Activated T-helper 1 cell treated with anti-CD3 and anti-CD28 coated beads, Interleukin-12 subunit alpha, Interleukin-12 subunit beta, Interleukin-2, Interleukin-4 antibody, amounts not matched to agents 30 ng/mL and 10 ng/mL and 1 ng/mL, durations not matched to agents 14 hours and 24 hours and 36 hours (primary cell): ENCODE measurements at regions of chr17 and their contacts with region 1.

Region 1: DNA sequence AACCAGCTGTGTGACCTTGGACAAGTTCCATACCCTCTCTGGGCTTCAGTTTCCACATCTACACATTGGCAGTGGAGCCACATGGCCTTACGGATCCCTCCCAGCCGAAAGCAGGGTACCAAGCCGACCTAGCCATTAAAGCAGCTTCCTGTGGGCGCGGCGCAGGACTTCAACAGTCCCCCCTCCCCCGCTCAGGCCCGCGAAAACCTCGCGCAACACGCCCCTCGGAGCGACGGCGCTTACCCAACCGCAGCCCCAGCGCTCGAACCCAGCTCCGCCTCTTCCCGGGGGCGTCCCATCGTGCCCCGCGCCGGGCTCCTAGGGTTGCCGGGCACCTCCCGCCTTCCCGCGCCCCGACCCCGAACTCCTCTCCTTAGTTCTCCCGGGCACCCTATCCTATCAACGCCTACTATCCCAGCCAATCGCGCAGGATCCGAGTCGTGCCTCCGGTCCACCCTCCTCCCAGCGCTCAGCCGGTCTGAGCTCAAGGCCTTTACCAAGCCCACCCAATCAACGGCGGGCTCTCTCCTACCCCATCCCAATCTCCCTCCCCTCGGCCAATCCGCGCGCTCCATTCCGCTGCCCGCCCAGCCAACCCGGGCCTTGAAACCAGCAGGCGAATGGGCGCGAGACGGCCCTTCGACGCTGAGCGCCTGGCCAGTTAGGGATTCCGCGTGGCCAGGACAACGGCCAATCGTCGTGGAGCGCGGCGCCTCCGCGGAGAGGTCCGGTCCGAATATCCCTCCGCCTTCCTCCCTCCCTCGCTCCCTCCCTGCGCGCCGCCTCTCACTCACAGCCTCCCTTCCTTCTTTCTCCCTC is at the start of gene KPNB1:
- DNase-seq: peak; percentile 98
- H3K4me3 Mint-ChIP-seq: peak within 1 kb of the TSS; percentile 98
- H3K27ac Mint-ChIP-seq: peak within 1 kb of the TSS; percentile 96
- H3K4me1 Mint-ChIP-seq: peaks cover 33% of the 10 kb centered on the region
- H3K27me3 Mint-ChIP-seq: no peaks in the 10 kb centered on the region
- total RNA-seq, gene KPNB1: 718 and 719 TPM in 2 replicates

Region 2: DNA sequence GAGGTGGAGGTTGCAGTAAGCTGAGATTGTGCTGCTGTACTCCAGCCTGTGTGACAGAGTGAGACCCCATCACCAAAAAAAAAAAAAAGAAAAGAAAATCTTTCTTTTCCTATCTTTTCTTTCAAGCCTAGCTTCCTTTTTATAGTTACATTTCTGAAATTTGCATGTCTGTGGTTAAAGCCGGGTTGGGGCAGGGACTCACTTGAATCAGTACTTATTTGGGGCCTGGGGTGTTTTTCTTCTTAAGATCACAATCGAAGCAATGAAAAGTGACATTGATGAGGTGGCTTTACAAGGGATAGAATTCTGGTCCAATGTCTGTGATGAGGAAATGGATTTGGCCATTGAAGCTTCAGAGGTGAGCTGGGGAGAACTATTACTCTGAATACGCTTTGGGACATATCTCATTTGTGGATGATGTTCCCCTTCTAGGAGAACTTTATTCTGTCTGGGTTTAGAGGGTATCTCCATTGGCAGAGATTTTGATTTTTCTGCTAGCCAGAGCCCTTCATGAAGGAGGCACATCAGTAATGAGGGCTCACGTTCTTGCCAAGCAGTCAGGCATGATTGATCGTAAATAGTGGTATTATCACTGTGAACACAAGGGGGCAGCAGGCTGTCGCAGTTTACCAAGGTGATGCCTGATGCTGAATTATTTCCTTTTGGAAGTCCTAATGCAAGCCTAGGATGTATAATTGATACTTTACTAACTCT is 14.7 kb after region 1 on chr17:
- intact Hi-C with region 1: loop called (anchors 1 kb)
- DNase-seq: peak; percentile 43
- H3K4me3 Mint-ChIP-seq: peak overlapping the region; percentile 30
- H3K27ac Mint-ChIP-seq: peak overlapping the region; percentile 70
- H3K4me1 Mint-ChIP-seq: peaks cover 38% of the 10 kb centered on the region
- H3K27me3 Mint-ChIP-seq: no peaks in the 10 kb centered on the region

Region 3: GRCh38 chr17:47720754-47721533 is 71.6 kb after region 1 on chr17:
- intact Hi-C with region 1: loop called (anchors 2 kb)
- DNase-seq: peak; percentile 85
- H3K4me3 Mint-ChIP-seq: peak overlapping the region; percentile 78
- H3K27ac Mint-ChIP-seq: peak overlapping the region; percentile 95
- H3K4me1 Mint-ChIP-seq: peaks cover 83% of the 10 kb centered on the region
- H3K27me3 Mint-ChIP-seq: no peaks in the 10 kb centered on the region

Region 4: DNA sequence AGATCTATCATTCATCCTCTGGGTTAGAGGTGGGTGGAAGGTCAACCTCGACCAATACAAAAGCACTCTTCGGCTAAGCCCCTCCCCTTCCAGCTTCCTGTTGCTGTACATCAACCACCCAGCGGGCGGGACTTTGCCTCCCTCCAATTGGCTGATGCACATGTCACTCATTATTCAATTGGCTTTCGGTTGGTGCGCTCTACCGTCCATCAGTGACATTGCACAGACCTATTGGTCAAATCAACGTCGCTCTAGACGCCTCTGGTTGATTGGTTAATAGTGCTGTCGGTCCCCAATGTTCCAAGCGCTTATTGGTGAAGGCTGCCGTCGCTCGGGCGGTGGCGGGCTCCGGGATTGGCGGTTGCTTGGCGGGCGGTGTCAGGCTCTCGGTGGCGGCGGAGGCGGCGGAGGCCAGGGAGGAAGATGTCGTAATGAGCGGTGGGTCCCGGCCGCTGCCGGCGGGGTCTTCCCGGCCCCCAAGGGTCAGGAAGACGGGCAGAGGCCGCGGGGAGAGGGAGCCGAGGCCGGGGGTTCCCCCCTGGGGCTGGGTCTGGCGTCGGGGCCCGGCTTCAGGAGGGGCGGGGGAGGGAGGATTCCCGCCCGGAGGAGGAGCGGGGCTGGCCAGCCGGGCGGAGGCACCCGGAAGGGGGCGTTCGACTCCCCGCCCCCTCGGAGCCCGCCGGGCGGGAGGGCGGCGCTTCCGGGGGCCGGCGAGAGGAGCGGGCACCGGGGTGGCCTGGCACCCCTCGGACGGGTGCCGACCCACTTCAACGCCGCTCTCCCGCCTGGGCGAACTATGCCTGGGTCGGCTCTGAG is 246.7 kb after region 1 on chr17 and contains the start of gene SP2:
- intact Hi-C with region 1: loop called (anchors 1 kb)
- DNase-seq: peak; percentile 100
- H3K4me3 Mint-ChIP-seq: peak within 1 kb of the TSS; percentile 98
- H3K27ac Mint-ChIP-seq: peak within 1 kb of the TSS; percentile 100
- H3K4me1 Mint-ChIP-seq: peaks cover 47% of the 10 kb centered on the region
- H3K27me3 Mint-ChIP-seq: peaks cover 3% of the 10 kb centered on the region
- total RNA-seq, gene SP2: 24.0 and 26.3 TPM in 2 replicates

Region 5: GRCh38 chr17:48047741-48048383 is 398.5 kb after region 1 on chr17 and contains the start of gene NFE2L1:
- intact Hi-C with region 1: loop called (anchors 1 kb)
- DNase-seq: peak; percentile 97
- H3K4me3 Mint-ChIP-seq: peak within 1 kb of the TSS; percentile 99
- H3K27ac Mint-ChIP-seq: peak within 1 kb of the TSS; percentile 100
- H3K4me1 Mint-ChIP-seq: peaks cover 69% of the 10 kb centered on the region
- H3K27me3 Mint-ChIP-seq: peaks cover 1% of the 10 kb centered on the region
- total RNA-seq, gene NFE2L1: 86.6 and 92.0 TPM in 2 replicates

Region 6: GRCh38 chr17:48413613-48414405 is 764.4 kb after region 1 on chr17:
- intact Hi-C with region 1: no loop called
- DNase-seq: no peak
- H3K4me3 Mint-ChIP-seq: peak overlapping the region; percentile 24
- H3K27ac Mint-ChIP-seq: peak overlapping the region; percentile 86
- H3K4me1 Mint-ChIP-seq: peaks cover 82% of the 10 kb centered on the region
- H3K27me3 Mint-ChIP-seq: no peaks in the 10 kb centered on the region